ENCODE measurements at regions of chr5 and their contacts with region 1.

Region 1: DNA sequence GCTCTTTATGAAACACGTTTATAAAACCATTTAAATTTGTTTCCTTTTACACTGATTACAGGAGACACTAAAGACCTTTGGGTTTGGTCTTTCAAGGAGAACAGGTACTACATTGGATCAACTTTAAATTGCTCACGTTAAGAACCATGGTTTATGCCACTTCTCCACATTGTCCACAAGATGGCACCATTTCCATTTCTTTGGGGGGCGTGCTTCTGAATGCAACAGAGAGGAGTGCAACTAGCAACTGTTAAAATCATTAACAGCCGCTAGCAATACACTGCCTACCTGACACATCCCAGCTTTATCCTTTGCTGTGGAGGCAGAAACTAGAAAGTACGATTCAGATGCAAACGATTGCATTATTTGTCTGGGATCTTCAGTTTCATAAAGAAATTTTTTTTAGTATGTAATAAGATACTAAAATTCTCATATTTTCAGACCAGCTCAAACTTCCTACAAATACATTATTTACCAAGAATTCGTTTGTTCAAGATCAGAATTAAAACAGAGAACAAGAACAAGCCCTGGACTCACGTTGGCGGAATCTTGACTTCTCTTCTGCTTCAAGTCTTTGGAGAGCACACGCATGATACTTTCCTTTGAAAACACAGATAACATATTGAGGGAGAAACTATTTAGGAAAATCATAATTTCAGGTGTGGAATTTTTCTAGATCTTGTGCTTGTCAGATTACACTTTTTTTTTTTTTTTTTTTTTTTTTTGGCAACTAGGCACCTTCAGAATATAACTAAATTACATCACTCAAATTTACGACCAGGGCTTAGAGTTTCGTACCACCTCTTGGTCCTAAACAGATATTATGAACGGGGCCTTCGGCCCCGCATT is 702 bp downstream of the CDC20B start:
- DNase-seq: peak in 6 of 10 donors; percentile 16 to 80 (median 39)

Region 2: GRCh38 chr5:55232985-55233928 is 61.0 kb after region 1 on chr5 and contains the start of gene CCNO:
- intact Hi-C with region 1: loop called (anchors 5 kb)
- DNase-seq: peak in 9 of 10 donors; percentile 43 to 95 (median 67)

Region 3: GRCh38 chr5:55307383-55308253 is 135.3 kb after region 1 on chr5 and contains the starts of genes DHX29 and MTREX:
- intact Hi-C with region 1: loop called (anchors 5 kb)
- DNase-seq: peak; percentile 90 to 99 (median 92)

Region 4: DNA sequence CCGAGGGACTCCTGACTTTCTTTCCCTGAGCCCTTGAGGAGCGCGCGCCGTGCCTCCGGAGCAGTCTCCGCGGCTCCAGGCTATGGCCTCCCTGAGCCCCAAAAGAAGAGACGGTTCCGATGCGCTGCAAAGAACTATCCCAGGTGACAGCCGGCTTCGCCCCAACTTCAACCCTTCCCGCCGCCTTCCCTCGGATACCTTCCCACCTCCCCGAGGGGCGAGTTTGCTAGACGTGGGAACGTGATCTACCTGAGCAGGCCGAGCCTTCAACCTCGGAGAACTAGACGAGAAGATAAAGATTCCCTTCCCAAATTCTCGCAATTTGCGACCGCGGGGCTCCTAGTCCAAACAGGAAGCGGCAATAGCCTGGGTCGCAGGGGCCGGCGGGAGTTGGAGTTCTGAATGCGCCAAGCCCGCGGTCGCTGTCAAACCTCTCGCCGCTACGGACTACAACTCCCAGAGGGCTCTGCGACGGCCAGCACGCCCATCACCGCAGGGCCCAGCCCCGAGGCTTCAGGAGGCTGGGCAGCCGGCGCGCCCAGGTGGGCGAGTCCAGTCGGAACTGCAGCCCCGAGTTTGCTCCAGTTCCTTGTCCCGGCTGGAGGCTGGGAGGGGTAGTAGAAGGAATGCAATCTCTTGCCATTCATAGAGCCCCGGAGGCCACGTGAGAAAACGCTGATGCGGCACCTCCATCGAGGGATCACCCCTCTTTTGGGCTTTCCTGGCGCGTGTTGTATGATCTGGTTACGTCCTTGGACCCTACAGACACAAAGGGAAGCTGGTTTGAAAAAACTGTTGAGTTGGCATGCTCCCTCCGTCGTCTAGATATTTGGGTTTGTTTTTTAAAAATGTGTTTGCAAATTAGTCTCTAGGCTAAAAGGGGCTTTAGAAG is 539.9 kb after region 1 on chr5 and contains the start of gene SLC38A9:
- intact Hi-C with region 1: loop called (anchors 5 kb)
- DNase-seq: peak; percentile 92 to 100 (median 97)

Measured in posterior cingulate gyrus (tissue), 11 donors.